ENCODE measurements at regions of chr11 and their contacts with region 1.

Region 1: DNA sequence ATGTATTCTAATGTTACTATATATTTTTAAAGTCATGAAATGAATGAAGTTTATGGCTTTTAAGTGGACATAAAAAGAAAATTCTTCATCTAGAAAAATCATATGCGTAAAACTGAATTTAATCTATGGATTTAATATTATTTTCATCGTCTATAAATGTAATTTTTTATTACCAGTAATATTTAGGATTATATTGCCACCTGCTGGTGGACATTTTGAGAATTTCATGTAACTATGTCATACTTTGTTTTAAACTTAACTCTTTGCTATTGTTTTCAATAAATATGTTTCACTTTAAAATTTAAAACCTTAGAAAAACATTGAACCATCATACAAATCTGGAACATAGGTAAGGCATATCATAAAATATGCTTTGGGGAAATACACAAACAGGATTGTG is 66.5 kb upstream of the CEP126 start:
- DNase-seq: no peak
- H3K4me3 ChIP-seq: no peak overlapping the region
- H3K27ac ChIP-seq: no peak overlapping the region
- H3K4me1 ChIP-seq: no peaks in the 10 kb centered on the region; the same call in 1 of the 2 replicates
- H3K27me3 ChIP-seq: no peaks in the 10 kb centered on the region
- CTCF ChIP-seq: peak; percentile 87

Region 2: GRCh38 chr11:101390539-101390938 is 457.7 kb before region 1 on chr11:
- CTCF ChIA-PET with region 1: no interaction called
- POLR2A ChIA-PET with region 1: no interaction called
- intact Hi-C with region 1: loop called (anchors 5 kb)
- DNase-seq: no peak
- H3K4me3 ChIP-seq: no peak overlapping the region
- H3K27ac ChIP-seq: no peak overlapping the region
- H3K4me1 ChIP-seq: no peaks in the 10 kb centered on the region
- H3K27me3 ChIP-seq: no peaks in the 10 kb centered on the region
- CTCF ChIP-seq: peak; percentile 51

Region 3: DNA sequence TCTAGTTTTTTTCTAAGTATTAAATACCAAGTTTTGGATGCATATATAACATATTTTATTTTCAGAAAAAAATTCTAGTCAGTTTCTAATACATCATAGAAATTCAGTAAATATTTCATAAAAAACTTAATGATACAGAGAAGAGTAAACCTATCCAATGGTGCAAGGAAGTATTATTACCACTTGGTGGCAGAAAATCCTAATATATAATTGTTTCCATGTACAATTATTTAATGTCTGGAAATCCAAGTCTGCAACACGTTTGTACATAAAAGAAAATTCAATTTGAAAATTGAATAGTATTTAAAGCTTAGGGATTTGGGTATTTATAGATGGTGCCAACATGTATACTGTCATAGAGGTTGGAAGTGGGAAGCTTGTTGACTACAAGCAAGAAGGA is 391.4 kb before region 1 on chr11:
- CTCF ChIA-PET with region 1: interaction called, 3 read pairs
- POLR2A ChIA-PET with region 1: no interaction called
- intact Hi-C with region 1: loop called (anchors 1 kb)
- DNase-seq: no peak
- H3K4me3 ChIP-seq: no peak overlapping the region
- H3K27ac ChIP-seq: no peak overlapping the region
- H3K4me1 ChIP-seq: no peaks in the 10 kb centered on the region
- H3K27me3 ChIP-seq: no peaks in the 10 kb centered on the region
- CTCF ChIP-seq: peak; percentile 77